OCI-LY7 (cell line): ENCODE measurements at regions of chr1 and their contacts with region 1.

Region 1: GRCh38 chr1:222732216-222733159 is 4.5 kb upstream of the FAM177B start:
- DNase-seq: peak; percentile 80
- H3K4me3 ChIP-seq: peak overlapping the region; percentile 39
- H3K27ac ChIP-seq: peak overlapping the region; percentile 80
- H3K4me1 ChIP-seq: peaks cover 35% of the 10 kb centered on the region
- CTCF ChIP-seq: no peak

Region 2: GRCh38 chr1:222814536-222815439 is 82.3 kb after region 1 on chr1 and contains the start of gene DISP1:
- CTCF ChIA-PET with region 1: no interaction called
- POLR2A ChIA-PET with region 1: interaction called, 3 read pairs
- intact Hi-C with region 1: loop called (anchors 5 kb)
- DNase-seq: peak; percentile 83
- H3K4me3 ChIP-seq: peak within 1 kb of the TSS; percentile 77
- H3K27ac ChIP-seq: peak within 1 kb of the TSS; percentile 22
- H3K4me1 ChIP-seq: peaks cover 16% of the 10 kb centered on the region
- CTCF ChIP-seq: no peak
- total RNA-seq, gene DISP1: 1.1 and 1.2 TPM in 2 replicates

Region 3: DNA sequence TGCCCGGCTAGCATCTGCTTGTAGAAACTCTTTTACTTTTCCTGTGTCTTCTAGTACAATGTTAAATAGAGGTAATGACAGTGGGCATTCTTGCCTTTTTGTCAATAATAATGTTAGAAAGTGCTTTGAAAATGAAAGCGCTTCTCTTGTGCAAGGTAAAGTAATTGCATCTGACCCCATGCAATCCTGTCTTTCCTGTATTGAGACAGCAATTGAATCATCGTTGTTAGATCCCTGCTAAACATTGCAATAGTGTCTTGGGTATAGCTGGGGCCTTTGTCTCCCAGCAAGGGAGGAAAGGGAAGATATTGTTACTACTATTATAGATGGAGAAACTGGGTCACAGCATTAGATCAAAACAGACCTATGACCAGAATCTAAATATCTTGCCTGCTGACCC is 329.7 kb after region 1 on chr1:
- CTCF ChIA-PET with region 1: no interaction called
- POLR2A ChIA-PET with region 1: no interaction called
- intact Hi-C with region 1: no loop called
- DNase-seq: no peak
- H3K4me3 ChIP-seq: no peak overlapping the region
- H3K27ac ChIP-seq: no peak overlapping the region
- H3K4me1 ChIP-seq: no peaks in the 10 kb centered on the region
- CTCF ChIP-seq: no peak